Mammary epithelial cell (primary cell): ENCODE measurements at regions of chrX and their contacts with region 1.

Region 1: DNA sequence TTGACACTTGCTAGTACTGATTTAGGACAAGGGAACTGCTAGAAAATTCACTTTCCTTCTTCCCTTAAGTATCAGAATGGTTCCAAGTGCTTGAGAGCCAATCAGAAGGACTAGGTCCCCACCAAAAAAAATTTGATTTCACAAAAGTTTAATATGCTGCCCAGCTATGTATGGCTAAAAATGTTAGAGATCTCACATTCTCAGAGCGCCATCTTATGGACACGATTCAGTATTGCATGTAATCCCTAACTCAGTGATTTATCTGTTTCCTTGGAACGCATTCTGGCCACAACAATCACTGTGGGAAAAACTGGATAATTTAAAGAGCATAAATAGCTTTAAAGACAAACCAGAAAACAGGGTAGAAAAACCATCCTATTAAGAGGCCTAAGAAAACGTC is 255.1 kb upstream of the GPC4 start:
- DNase-seq: peak; percentile 37
- H3K4me3 ChIP-seq: no peak overlapping the region
- H3K27ac ChIP-seq: no peak overlapping the region
- H3K4me1 ChIP-seq: peaks cover 6% of the 10 kb centered on the region
- H3K27me3 ChIP-seq: no peaks in the 10 kb centered on the region
- CTCF ChIP-seq: peak; percentile 80

Region 2: DNA sequence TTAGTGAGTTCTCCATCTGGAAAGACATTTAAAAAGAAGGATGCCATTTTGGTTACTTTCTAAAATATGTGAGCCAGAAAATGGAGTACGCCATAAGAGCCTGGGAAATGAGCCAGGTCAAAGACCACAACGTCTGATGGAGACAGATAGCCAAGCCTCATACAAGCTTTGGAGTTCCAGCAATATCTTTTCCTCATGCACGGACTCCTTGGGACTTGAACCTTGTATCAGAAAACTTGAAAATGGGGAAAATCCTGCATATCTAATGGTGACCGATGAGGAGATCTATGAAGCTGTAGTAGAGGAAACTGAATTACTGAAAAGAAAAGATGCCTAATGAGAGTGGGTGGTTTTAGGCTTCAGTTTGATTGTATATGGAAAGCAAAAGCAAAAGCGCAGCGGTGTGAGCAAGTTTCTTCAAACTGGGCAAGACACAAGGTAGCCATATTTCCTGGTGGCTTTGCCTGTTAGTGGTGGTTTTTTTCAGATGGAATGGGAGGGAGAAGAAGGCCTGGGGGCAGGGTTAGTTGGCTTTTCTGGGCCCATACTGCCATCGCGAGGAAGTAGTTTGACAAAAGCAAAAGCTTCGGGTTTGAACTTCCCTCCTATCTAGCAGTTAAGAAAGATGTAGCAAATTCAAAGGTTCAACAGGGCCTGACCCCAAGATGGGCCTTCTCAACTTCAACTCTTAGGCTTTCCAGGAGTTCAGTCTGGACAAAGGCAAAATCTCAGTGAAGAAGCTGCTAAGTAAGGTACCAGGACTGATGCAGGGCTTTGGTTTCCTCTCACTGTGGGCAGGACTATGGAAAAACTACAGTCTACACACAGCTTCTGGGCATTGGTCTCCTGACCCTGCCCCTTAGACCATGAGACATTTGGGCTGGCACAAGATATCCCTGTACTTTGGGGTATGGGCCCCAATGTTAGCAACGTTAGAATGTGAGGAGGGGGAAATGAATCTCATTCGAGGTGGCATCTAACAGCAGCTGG is 1857.3 kb before region 1 on chrX:
- CTCF ChIA-PET with region 1: no interaction called
- dilution Hi-C with region 1: no loop called
- in situ Hi-C with region 1: no loop called
- intact Hi-C with region 1: loop called (anchors 10 kb)
- DNase-seq: peak; percentile 79
- H3K4me3 ChIP-seq: peak overlapping the region; percentile 24 to 43 (median 39)
- H3K27ac ChIP-seq: no peak overlapping the region
- H3K4me1 ChIP-seq: no peaks in the 10 kb centered on the region
- H3K27me3 ChIP-seq: no peaks in the 10 kb centered on the region
- CTCF ChIP-seq: peak; percentile 18 to 49

Region 3: GRCh38 chrX:132740316-132741123 is 929.9 kb before region 1 on chrX:
- CTCF ChIA-PET with region 1: no interaction called
- dilution Hi-C with region 1: no loop called
- in situ Hi-C with region 1: no loop called
- intact Hi-C with region 1: loop called (anchors 5 kb)
- DNase-seq: no peak
- H3K4me3 ChIP-seq: no peak overlapping the region
- H3K27ac ChIP-seq: no peak overlapping the region
- H3K4me1 ChIP-seq: peaks cover 3% of the 10 kb centered on the region
- H3K27me3 ChIP-seq: no peaks in the 10 kb centered on the region
- CTCF ChIP-seq: peak; percentile 73 to 75

Region 4: GRCh38 chrX:132984058-132984650 is 686.2 kb before region 1 on chrX:
- CTCF ChIA-PET with region 1: no interaction called
- dilution Hi-C with region 1: no loop called
- in situ Hi-C with region 1: no loop called
- intact Hi-C with region 1: loop called (anchors 5 kb)
- DNase-seq: no peak
- H3K4me3 ChIP-seq: no peak overlapping the region
- H3K27ac ChIP-seq: no peak overlapping the region
- H3K4me1 ChIP-seq: no peaks in the 10 kb centered on the region
- H3K27me3 ChIP-seq: peaks cover 2% of the 10 kb centered on the region
- CTCF ChIP-seq: no peak

Region 5: GRCh38 chrX:133045986-133046385 is 624.4 kb before region 1 on chrX:
- CTCF ChIA-PET with region 1: no interaction called
- dilution Hi-C with region 1: no loop called
- in situ Hi-C with region 1: no loop called
- intact Hi-C with region 1: loop called (anchors 1 kb)
- DNase-seq: peak; percentile 9
- H3K4me3 ChIP-seq: no peak overlapping the region
- H3K27ac ChIP-seq: no peak overlapping the region
- H3K4me1 ChIP-seq: no peaks in the 10 kb centered on the region
- H3K27me3 ChIP-seq: peaks cover 1% of the 10 kb centered on the region
- CTCF ChIP-seq: peak; percentile 32 to 59

Region 6: DNA sequence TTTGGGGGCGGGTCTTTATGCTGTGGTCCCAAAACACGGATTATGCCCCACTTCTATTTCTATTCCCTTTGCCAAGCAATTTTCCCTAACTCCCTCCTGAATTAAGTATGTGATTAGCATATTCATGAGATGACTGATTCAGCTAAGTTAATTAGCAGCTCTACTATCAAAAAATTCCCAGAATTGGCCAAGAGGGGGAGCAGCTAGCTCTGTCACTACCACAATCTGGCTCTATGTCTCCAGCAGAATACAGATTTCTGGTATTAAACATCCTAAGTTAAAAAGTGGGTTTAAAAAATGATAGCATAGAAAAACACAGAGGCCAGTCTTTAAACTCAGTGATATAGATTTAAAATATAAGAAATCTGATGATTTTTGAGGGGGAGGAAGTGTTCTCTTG is 335.4 kb before region 1 on chrX:
- CTCF ChIA-PET with region 1: no interaction called
- dilution Hi-C with region 1: no loop called
- in situ Hi-C with region 1: loop called (anchors 10 to 25 kb)
- intact Hi-C with region 1: loop called (anchors 1 kb)
- DNase-seq: peak; percentile 11
- H3K4me3 ChIP-seq: no peak overlapping the region
- H3K27ac ChIP-seq: no peak overlapping the region
- H3K4me1 ChIP-seq: no peaks in the 10 kb centered on the region
- H3K27me3 ChIP-seq: no peaks in the 10 kb centered on the region
- CTCF ChIP-seq: peak; percentile 49 to 62

Region 7: GRCh38 chrX:133415276-133416105 is 254.9 kb before region 1 on chrX and contains the start of gene GPC4:
- CTCF ChIA-PET with region 1: no interaction called
- dilution Hi-C with region 1: no loop called
- in situ Hi-C with region 1: no loop called
- intact Hi-C with region 1: loop called (anchors 2 kb)
- DNase-seq: peak; percentile 49
- H3K4me3 ChIP-seq: peak within 1 kb of the TSS; percentile 31 to 56 (median 55)
- H3K27ac ChIP-seq: no peak within 1 kb of the TSS
- H3K4me1 ChIP-seq: no peaks in the 10 kb centered on the region
- H3K27me3 ChIP-seq: peaks cover 10% of the 10 kb centered on the region
- CTCF ChIP-seq: no peak
- total RNA-seq, gene GPC4: 7.1 to 7.2 TPM

Region 8: DNA sequence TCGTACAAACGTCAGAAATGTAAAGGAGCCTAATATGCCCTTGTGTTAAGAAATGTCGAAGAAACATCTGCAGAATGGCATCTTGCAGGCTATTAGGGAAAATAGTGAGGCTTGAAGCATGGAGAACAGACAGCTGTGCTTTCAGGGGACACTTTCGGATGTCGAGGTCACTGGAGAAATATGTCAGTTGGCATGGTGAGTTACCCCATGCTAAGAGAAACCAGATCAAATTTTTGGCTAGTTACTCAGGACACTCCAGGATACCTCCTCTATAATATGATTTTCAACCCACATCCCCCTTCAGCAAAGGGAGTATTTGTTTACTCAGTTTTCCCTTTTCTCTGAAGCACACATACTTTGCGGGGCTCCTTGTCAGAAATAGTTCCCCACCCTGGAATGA is 143.6 kb after region 1 on chrX:
- CTCF ChIA-PET with region 1: no interaction called
- dilution Hi-C with region 1: no loop called
- in situ Hi-C with region 1: no loop called
- intact Hi-C with region 1: no loop called
- DNase-seq: no peak
- H3K4me3 ChIP-seq: no peak overlapping the region
- H3K27ac ChIP-seq: no peak overlapping the region
- H3K4me1 ChIP-seq: no peaks in the 10 kb centered on the region
- H3K27me3 ChIP-seq: peaks cover 5% of the 10 kb centered on the region
- CTCF ChIP-seq: no peak